Activated T-helper 2 cell treated with anti-CD3 and anti-CD28 coated beads, Interferon-gamma antibody, Interleukin-2, Interleukin-4, amounts not matched to agents 10 μg/mL and 5 μg/mL and 100 μg/mL, durations not matched to agents 14 hours and 24 hours and 36 hours (primary cell): ENCODE measurements at regions of chr3 and their contacts with region 1.

Region 1: GRCh38 chr3:185976977-185977678 is 39.3 kb upstream of the TRA2B start:
- DNase-seq: peak; percentile 71
- H3K4me3 Mint-ChIP-seq: no peak overlapping the region
- H3K27ac Mint-ChIP-seq: peak overlapping the region; percentile 68
- H3K4me1 Mint-ChIP-seq: peaks cover 9% of the 10 kb centered on the region
- H3K27me3 Mint-ChIP-seq: peaks cover 44% of the 10 kb centered on the region

Region 2: DNA sequence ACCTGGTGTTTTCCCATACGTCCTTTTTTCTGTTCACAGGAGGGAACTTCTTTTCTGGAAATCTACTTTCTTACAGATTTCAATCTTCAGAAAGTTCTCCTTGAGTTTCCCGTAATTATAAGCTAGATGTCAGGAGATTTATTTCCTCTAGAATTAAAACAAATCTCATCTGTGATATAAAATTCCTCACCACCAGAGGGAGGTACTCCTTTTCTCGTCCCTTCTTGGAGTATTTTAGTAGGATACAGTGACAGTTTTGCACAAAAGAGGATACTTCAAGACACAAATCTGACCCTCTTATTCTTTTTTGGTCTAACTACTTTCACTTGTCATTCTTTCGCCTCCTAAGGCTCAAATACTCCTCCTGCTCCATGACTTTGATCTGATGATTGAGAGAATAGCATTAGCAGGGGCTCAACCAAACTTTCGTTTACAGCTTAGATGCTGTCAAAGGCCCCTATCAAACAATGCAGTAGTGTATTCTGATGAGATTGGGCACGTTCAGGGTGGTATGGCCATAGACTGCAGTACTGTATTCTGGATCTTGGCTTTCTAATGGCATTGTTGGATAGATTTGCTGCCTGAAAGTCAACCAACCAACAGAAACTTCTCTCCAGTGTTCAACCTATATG is 516.3 kb before region 1 on chr3:
- intact Hi-C with region 1: no loop called
- DNase-seq: no peak
- H3K4me3 Mint-ChIP-seq: no peak overlapping the region
- H3K27ac Mint-ChIP-seq: no peak overlapping the region
- H3K4me1 Mint-ChIP-seq: no peaks in the 10 kb centered on the region
- H3K27me3 Mint-ChIP-seq: no peaks in the 10 kb centered on the region

Region 3: DNA sequence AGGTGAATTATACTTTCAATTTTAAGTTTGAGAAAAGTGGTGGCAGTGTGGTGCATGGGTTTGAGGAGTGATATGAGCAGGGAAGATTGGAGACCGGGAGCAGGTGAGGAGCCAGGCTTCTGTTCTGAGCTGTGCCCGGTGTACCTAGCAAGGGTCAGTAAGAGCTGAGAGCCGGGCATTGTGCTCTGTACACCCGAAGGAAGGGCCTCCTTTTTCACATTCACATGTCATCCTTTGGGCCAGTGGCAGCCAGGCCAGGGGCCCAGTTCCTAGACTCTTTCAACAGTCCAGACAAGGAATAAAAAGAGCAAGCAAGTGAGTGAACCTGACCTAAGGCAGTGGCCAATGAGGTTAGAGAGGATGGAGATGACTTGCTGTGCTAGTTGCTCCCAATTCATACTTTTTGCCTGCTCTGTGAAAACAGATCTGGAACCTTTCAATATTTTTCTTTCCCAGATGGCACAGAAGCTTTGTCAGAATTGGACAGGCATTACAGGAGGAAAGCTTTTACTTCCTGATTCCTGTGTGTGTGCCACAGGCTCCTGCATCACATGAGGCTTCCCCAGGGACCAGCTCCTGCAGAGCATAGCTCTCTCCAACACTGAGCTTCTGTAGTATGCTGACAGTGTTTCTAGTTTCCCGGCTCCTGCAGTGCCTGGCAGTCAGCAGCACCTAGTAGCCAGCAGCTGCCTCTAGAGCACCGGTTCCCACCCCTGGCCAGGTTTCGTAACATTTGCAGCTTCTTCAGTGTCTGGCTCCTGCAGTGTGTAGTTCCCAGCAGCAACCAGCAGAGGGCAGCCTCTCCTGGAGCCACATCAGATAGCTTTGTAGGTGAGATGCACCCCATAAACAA is 34.0 kb before region 1 on chr3:
- intact Hi-C with region 1: loop called (anchors 2 kb)
- DNase-seq: peak; percentile 75
- H3K4me3 Mint-ChIP-seq: no peak overlapping the region
- H3K27ac Mint-ChIP-seq: no peak overlapping the region
- H3K4me1 Mint-ChIP-seq: peaks cover 20% of the 10 kb centered on the region
- H3K27me3 Mint-ChIP-seq: peaks cover 24% of the 10 kb centered on the region

Region 4: GRCh38 chr3:186241910-186242821 is 265.0 kb after region 1 on chr3:
- intact Hi-C with region 1: loop called (anchors 1 kb)
- DNase-seq: peak; percentile 35
- H3K4me3 Mint-ChIP-seq: no peak overlapping the region
- H3K27ac Mint-ChIP-seq: no peak overlapping the region
- H3K4me1 Mint-ChIP-seq: peaks cover 12% of the 10 kb centered on the region
- H3K27me3 Mint-ChIP-seq: peaks cover 33% of the 10 kb centered on the region

Region 5: DNA sequence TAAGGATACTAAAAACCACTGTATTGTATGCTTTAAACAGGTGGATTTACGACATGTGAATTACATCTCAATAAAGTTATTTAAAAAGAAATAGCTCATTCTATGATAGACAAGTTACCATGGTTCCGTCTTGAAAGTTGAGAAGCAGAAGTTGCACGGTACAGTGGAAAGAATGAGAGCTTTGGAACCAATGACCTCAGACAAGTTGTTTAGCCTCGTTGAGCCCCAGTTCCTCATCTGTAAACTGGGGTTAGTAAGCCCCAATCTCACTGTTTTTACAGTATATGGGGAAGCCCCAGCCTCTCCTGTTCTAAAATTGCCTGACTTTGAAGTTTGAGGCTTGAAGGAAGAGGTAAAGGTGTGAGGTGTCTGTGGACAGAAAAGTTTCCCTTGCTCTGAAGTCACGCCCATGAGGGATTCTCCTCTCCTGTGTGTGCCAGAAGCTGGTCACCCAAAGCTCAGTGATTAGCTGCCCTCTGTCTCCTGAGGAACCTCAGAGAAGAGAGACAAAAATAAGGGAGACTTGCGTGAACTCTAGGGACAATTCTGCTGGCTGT is 557.1 kb after region 1 on chr3:
- intact Hi-C with region 1: loop called (anchors 1 kb)
- DNase-seq: peak; percentile 14
- H3K4me3 Mint-ChIP-seq: peak overlapping the region; percentile 57
- H3K27ac Mint-ChIP-seq: peak overlapping the region; percentile 90
- H3K4me1 Mint-ChIP-seq: peaks cover 42% of the 10 kb centered on the region
- H3K27me3 Mint-ChIP-seq: no peaks in the 10 kb centered on the region

Region 6: GRCh38 chr3:186540221-186540834 is 563.2 kb after region 1 on chr3:
- intact Hi-C with region 1: loop called (anchors 1 kb)
- DNase-seq: peak; percentile 70
- H3K4me3 Mint-ChIP-seq: no peak overlapping the region
- H3K27ac Mint-ChIP-seq: peak overlapping the region; percentile 20
- H3K4me1 Mint-ChIP-seq: peaks cover 31% of the 10 kb centered on the region
- H3K27me3 Mint-ChIP-seq: no peaks in the 10 kb centered on the region

Region 7: GRCh38 chr3:186570096-186570940 is 593.2 kb after region 1 on chr3 and contains the start of gene DNAJB11:
- intact Hi-C with region 1: loop called (anchors 1 kb)
- DNase-seq: peak; percentile 98
- H3K4me3 Mint-ChIP-seq: peak within 1 kb of the TSS; percentile 89
- H3K27ac Mint-ChIP-seq: peak within 1 kb of the TSS; percentile 98
- H3K4me1 Mint-ChIP-seq: peaks cover 42% of the 10 kb centered on the region
- H3K27me3 Mint-ChIP-seq: no peaks in the 10 kb centered on the region
- total RNA-seq, gene DNAJB11: 66.3 and 72.8 TPM in 2 replicates

Region 8: DNA sequence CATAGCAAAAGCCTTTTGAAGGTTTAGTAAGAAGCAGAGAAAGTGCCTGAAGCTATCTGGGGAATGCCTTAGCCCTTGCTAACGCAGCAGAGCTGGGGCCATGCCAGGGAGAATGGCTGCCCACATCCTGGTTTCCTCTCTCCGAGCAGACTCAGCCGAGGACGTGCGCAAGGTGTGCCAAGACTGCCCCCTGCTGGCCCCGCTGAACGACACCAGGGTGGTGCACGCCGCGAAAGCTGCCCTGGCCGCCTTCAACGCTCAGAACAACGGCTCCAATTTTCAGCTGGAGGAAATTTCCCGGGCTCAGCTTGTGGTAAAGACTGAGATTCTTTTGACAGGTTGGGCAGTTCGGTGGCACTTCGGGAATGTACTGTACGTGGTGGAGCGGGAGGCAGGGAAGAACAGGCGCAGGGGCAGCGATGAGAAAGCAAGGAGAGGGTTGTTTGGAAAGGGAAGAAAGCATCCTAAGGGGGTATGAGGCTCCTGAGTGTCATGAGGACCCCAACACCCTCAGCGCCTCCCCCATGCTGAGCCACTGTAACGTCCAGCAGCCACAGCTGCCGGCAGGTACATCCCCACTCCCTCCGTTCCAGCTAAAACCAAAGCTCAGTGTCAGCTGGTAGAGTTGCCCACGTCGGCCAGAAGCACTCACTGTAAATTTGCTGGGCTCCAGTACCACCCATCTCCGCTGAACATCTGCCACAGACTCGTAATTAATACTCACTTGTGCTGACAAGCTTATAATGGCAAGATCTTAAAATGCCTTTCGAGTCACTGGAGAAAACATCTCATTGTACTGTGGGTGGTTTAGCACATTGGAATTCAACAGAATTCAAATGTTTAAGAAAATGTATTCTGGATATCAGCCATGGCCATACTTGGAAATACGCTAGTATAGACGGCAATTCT is 640.2 kb after region 1 on chr3:
- intact Hi-C with region 1: loop called (anchors 1 kb)
- DNase-seq: peak; percentile 77
- H3K4me3 Mint-ChIP-seq: peak overlapping the region; percentile 61
- H3K27ac Mint-ChIP-seq: peak overlapping the region; percentile 50
- H3K4me1 Mint-ChIP-seq: peaks cover 13% of the 10 kb centered on the region
- H3K27me3 Mint-ChIP-seq: peaks cover 43% of the 10 kb centered on the region